ENCODE measurements at regions of chr16 and their contacts with region 1.

Region 1: DNA sequence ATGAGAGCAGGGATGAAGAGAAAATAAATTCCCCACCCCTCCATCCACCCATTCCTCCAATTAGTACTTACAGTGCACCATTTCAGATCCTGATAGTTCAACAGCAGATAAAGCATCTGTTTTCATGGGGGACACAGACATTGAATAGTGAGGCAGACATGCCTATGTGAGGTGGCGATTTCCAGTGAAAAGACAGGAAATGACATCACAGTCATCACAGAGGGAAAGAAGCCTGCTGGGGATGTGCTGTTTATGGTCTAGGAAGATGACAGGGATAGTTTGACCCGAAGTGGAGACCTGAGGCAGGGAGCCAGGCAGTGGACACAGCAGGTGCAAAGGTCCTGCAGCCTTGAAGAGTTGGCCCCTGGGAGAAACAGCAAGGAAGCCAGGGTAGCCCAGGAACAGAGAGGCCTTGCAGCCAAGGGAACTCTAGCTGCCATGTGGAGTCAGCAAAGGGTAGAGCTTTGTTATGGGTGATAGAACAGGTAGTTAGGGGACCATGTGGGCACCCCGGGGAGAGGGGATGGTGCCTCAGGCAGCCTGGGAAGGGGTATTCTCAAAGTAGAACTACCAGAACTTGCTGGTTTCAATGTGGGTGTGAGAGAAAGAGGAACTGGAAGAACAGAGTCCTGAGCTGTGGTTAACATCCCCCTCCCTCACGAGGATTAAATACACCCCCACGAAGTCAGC is 256.6 kb downstream of the CPPED1 start:
- DNase-seq: peak; percentile 86
- H3K4me3 ChIP-seq: peak overlapping the region; percentile 64
- H3K27ac ChIP-seq: peak overlapping the region; percentile 98
- H3K4me1 ChIP-seq: peaks cover 100% of the 10 kb centered on the region
- CTCF ChIP-seq: no peak

Region 2: DNA sequence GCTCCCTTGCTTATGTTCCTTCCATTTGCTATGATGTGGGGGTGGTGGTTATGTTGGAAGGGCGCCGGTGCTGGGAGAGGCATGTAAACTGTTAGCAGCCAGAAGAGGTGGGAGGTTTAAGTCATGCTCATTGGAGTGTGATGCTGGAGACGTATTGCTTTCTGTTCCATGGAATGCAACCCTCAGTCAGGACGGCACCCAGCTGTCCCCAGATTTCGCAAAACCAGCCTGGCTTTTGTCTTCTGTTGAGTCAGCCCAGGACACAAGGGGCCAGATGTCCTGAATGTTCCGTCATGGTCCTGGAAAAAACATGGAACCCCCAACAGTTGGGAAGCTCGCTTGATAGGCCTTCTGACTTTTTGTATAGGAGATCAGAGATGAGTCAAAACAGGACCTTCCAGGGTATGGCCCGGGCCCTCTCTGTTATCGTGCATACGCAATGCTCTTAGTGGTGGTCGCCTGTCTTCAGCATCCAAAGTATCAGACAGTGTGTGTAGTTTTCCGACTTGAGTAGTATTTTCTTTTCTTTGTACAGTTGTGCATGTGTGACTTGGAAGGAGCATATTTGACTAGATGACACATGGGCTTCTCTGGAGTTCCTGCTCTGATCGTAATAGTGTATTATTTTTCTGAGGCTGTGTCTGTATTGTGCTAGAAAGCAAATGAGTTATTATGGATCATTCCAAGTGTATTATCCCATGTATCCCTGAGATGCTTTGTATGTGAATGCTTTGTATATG is 368.6 kb before region 1 on chr16:
- CTCF ChIA-PET with region 1: no interaction called
- POLR2A ChIA-PET with region 1: no interaction called
- intact Hi-C with region 1: no loop called
- DNase-seq: no peak
- H3K4me3 ChIP-seq: no peak overlapping the region
- H3K27ac ChIP-seq: no peak overlapping the region
- H3K4me1 ChIP-seq: peaks cover 5% of the 10 kb centered on the region
- CTCF ChIP-seq: no peak

Region 3: DNA sequence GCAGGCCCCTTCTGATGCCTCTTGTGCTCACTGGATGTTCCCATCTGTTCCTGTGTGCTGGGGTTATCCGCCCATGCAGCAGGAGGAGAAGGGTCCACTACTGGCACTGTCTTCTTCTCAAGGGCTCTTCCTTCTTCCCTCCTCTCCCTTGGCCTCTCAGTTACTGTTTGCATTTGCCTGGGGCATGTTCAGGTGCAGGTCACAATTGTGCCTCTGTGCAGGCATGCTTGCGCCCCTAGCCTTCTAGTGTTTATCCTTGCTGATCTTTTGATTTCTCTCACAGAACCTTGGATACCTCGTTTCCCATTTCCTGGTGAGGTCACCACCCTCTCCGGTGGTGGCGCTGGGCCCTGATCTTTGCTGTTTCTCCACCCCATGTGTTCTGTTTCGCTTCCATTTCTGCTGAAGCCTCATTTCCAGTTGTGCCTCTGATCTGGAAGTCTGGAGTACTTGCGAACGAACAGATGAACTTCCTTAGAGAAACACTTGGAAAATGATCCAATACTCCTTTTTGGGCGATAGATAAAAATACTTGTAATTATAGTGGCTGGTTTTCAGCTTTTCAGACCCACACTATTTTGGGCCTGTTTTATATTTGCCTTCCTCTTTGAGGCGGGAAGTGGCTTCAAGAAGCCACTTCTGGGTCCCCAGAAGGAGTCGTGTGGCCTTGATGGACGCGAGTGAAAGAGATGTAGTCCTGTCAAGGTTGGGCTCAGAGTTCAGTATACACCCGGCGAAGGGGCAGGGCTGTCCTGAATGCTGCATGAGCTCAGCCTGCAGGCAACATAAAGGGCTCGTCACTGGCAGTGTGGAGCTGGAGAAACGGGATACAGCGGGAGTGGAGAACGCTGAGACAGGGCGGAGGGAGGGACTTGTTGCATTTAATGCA is 257.6 kb before region 1 on chr16:
- CTCF ChIA-PET with region 1: no interaction called
- POLR2A ChIA-PET with region 1: no interaction called
- intact Hi-C with region 1: loop called (anchors 10 kb)
- DNase-seq: peak; percentile 51
- H3K4me3 ChIP-seq: no peak overlapping the region
- H3K27ac ChIP-seq: peak overlapping the region; percentile 95
- H3K4me1 ChIP-seq: peaks cover 93% of the 10 kb centered on the region
- CTCF ChIP-seq: no peak

Region 4: GRCh38 chr16:12558641-12559040 is 11.6 kb after region 1 on chr16:
- CTCF ChIA-PET with region 1: interaction called, 4 read pairs
- POLR2A ChIA-PET with region 1: interaction called, 16 read pairs
- intact Hi-C with region 1: no loop called
- DNase-seq: peak; percentile 43
- H3K4me3 ChIP-seq: peak overlapping the region; percentile 23
- H3K27ac ChIP-seq: peak overlapping the region; percentile 68
- H3K4me1 ChIP-seq: peaks cover 59% of the 10 kb centered on the region
- CTCF ChIP-seq: peak; percentile 63

Region 5: GRCh38 chr16:12573730-12574383 is 26.8 kb after region 1 on chr16:
- CTCF ChIA-PET with region 1: interaction called, 4 read pairs
- POLR2A ChIA-PET with region 1: interaction called, 5 read pairs
- intact Hi-C with region 1: loop called (anchors 2 kb)
- DNase-seq: peak; percentile 66
- H3K4me3 ChIP-seq: no peak overlapping the region
- H3K27ac ChIP-seq: peak overlapping the region; percentile 51
- H3K4me1 ChIP-seq: peaks cover 59% of the 10 kb centered on the region
- CTCF ChIP-seq: peak; percentile 99

Region 6: DNA sequence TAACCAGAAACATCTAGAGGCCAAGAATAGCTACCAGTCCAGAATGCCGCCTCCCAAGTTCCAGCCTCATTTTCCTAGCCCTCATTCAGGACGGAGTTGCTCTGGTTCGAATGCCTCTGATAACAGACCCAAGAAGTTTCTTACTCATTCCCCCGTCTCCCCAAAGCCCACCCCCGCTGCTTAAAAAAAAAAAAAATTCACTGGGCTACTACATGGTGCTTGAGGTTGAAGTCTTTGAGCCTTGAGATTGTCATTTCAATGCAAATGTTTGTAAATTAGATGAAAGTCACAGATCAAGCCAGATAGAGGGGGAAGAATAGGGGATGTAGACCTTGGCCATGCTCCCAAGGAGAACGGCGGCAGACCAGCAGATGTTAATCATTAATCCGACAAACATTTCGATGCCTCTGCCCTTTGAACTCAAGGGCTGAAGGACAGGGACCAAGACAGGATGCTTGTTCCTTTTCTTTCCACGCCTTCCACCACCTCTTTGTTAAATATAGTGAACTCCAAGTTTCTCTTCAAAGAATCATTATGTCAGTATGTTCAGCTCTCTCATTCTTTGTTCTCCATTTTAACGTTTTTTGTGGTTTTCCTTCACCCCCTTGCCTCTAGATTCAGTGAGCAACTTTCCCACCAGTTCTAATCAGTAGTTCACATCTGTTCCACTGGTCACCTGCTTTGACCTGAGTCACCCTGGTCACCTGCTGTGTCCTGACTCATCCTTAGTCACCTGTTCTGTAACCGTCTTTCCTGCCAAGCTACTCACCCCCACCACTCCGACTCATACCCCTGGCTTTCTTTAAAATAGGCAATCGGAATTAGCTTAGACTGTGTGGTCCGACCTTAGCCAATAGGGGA is 66.3 kb after region 1 on chr16:
- CTCF ChIA-PET with region 1: no interaction called
- POLR2A ChIA-PET with region 1: no interaction called
- intact Hi-C with region 1: loop called (anchors 5 kb)
- DNase-seq: no peak
- H3K4me3 ChIP-seq: no peak overlapping the region
- H3K27ac ChIP-seq: no peak overlapping the region
- H3K4me1 ChIP-seq: peaks cover 10% of the 10 kb centered on the region
- CTCF ChIP-seq: no peak